Transverse colon (tissue), 4 donors: ENCODE measurements at regions of chr10 and their contacts with region 1.

Region 1: GRCh38 chr10:104353325-104354048 is at the start of gene CFAP58:
- DNase-seq: peak; percentile 96
- H3K4me3 ChIP-seq: peak within 1 kb of the TSS in 3 of 4 donors; percentile 18 to 47 (median 30)
- H3K27ac ChIP-seq: peak within 1 kb of the TSS in 2 of 4 donors; percentile 6 to 49
- H3K4me1 ChIP-seq: peaks cover 9 to 28% (median 12%) of the 10 kb centered on the region in 4 donors
- H3K27me3 ChIP-seq: no peaks in the 10 kb centered on the region
- CTCF ChIP-seq: peak; percentile 54 to 77 (median 69)
- EP300 ChIP-seq: no peak
- POLR2A ChIP-seq: no peak
- total RNA-seq, gene CFAP58: 0.16 to 0.27 TPM in 2 of 4 donors, not detected in the others

Region 2: DNA sequence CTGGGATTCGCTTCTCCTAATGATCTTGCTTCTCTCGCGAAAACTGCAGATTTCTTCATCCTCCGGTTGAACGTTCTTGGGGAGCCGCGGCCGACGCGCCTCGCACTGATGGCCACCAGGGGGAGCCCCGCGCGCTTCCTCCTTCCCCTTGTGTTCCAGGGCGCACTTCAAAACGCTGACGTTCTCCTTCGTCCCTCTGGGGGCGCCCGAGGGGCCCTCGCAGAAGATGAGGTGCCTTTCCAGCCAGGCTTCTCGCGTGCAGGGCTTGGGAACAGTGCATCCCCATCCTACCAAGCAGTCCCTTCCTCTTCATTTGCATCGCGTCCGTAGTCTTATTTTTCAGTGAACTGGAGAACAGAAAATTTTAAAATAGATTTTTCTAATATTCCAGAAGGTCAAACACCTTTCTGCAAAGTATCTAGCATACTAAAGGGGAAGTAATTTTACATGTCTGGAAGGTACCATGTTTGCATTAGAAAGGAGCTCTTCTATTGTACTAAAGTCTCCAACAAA is 62.0 kb before region 1 on chr10:
- in situ Hi-C with region 1: loop called in 3 of 4 experiments (anchors 5 to 10 kb)
- intact Hi-C with region 1: loop called (anchors 5 kb)
- DNase-seq: peak; percentile 91
- H3K4me3 ChIP-seq: no peak overlapping the region
- H3K27ac ChIP-seq: no peak overlapping the region
- H3K4me1 ChIP-seq: peaks cover 0 to 7% (median 2%) of the 10 kb centered on the region in 4 donors
- H3K27me3 ChIP-seq: no peaks in the 10 kb centered on the region
- CTCF ChIP-seq: peak; percentile 98 to 100 (median 99)
- EP300 ChIP-seq: no peak
- POLR2A ChIP-seq: no peak

Region 3: DNA sequence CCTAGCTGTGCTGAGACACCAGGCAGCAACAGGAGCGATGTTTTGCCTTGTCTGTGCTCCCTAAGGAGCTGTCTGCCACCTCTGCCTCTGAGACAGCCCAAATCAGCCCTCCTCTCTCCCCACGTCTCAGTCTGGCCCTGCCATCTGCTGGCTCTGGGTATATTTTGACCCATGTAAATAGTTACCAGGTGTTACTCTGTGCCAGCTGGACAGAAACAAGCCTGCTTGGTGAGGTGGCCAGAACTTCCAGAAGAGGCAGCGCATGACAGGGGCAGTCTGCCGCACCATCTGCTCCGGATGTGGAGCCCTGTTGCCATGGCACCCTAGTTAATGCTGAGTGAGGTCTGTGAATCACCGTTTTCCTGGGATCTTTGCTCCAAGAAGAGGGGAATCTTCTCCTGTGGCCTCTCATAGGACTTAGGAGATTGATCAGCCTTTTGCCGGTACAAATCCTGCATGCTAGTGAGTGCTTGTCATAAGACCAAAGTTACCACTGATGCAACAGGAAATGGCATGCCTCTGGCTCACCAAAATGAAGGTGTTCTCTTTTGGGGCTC is 52.7 kb before region 1 on chr10:
- in situ Hi-C with region 1: loop called in 3 of 4 experiments (anchors 5 to 10 kb)
- intact Hi-C with region 1: loop called (anchors 5 kb)
- DNase-seq: peak; percentile 65
- H3K4me3 ChIP-seq: no peak overlapping the region
- H3K27ac ChIP-seq: peak overlapping the region; percentile 57 to 78 (median 69)
- H3K4me1 ChIP-seq: peaks cover 0 to 13% (median 7%) of the 10 kb centered on the region in 4 donors
- H3K27me3 ChIP-seq: no peaks in the 10 kb centered on the region
- CTCF ChIP-seq: no peak
- EP300 ChIP-seq: no peak
- POLR2A ChIP-seq: no peak

Region 4: GRCh38 chr10:104308439-104308903 is 45.0 kb before region 1 on chr10:
- in situ Hi-C with region 1: loop called in 2 of 4 experiments (anchors 5 kb)
- intact Hi-C with region 1: loop called (anchors 5 kb)
- DNase-seq: no peak
- H3K4me3 ChIP-seq: no peak overlapping the region
- H3K27ac ChIP-seq: no peak overlapping the region
- H3K4me1 ChIP-seq: peaks cover 0 to 9% (median 0%) of the 10 kb centered on the region in 4 donors
- H3K27me3 ChIP-seq: no peaks in the 10 kb centered on the region
- CTCF ChIP-seq: no peak
- EP300 ChIP-seq: no peak
- POLR2A ChIP-seq: no peak